ENCODE measurements at regions of chr12 and their contacts with region 1.

Region 1: DNA sequence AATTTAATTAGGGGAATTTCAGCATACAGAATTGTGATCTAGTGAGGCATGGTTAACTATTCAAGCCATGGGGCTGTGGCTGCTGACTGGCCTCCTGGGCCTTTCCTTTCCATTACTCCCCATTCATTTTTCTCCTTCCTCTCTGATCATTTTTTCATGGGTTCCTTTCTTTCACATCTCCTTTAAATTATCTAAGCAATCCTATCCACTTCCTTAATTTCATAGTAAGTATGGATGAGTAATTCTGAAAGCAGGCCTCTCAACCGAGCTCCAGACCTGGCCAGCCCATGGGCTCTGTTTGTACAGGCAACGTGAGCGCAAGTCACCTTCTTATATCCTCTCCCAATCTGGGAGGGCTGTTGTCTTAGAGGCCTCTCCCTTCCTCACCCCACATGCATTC is 13.4 kb downstream of the CKAP4 start:
- DNase-seq: no peak
- H3K4me3 ChIP-seq: no peak overlapping the region
- H3K27ac ChIP-seq: no peak overlapping the region
- H3K4me1 ChIP-seq: peaks cover 0 to 8% (median 0%) of the 10 kb centered on the region in 4 donors
- H3K27me3 ChIP-seq: no peaks in the 10 kb centered on the region
- CTCF ChIP-seq: no peak
- EP300 ChIP-seq: no peak
- POLR2A ChIP-seq: no peak

Region 2: DNA sequence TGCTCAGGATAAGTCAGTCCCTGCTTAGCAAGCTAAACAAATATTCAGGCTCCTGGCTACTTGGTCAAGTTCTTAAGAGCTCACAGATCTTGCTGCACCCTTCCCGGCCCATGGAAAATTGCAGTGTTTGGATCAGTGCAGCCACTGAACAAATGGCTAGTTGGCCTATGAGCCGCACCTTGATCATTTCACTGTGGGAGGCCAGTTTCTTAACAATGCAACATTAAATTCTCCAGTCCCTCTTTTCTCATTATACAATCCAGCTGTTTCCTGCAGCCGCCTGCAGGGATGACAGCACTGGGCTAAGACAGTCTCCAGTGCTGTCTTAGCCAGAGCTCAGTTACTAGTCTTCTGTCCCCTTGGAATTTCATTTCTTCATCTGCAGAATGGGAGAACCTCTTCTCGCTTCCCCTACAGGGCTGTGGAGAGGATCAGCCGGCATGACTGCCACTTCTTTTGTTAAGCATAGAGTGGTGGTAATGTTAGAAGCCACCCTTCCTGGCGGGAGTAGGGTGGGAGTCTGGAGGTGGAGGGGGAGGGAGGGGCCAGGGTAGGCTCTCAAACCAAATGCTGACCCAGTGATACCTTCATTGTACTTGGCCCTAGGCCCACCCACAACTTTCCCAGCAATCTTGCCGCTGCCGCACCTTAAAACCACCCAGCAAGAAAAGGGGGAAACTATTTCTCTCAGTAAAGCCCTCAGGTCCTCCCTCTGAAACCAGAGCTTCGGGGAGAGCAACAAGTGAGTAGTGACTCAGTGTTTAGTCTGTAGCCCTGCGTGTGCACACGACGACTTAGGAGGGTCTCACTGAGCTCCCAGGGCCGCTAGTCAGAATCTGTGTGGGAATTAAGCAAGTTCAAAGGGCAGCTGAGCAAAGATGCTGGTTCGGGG is 241.4 kb before region 1 on chr12:
- intact Hi-C with region 1: no loop called
- DNase-seq: peak in 1 of 2 donors; percentile 41
- H3K4me3 ChIP-seq: no peak overlapping the region
- H3K27ac ChIP-seq: peak overlapping the region in 1 of 5 donors; percentile 52
- H3K4me1 ChIP-seq: peaks cover 0 to 3% (median 0%) of the 10 kb centered on the region in 4 donors
- H3K27me3 ChIP-seq: peaks cover 0 to 18% (median 0%) of the 10 kb centered on the region in 3 donors
- CTCF ChIP-seq: no peak
- EP300 ChIP-seq: no peak
- POLR2A ChIP-seq: no peak

Region 3: DNA sequence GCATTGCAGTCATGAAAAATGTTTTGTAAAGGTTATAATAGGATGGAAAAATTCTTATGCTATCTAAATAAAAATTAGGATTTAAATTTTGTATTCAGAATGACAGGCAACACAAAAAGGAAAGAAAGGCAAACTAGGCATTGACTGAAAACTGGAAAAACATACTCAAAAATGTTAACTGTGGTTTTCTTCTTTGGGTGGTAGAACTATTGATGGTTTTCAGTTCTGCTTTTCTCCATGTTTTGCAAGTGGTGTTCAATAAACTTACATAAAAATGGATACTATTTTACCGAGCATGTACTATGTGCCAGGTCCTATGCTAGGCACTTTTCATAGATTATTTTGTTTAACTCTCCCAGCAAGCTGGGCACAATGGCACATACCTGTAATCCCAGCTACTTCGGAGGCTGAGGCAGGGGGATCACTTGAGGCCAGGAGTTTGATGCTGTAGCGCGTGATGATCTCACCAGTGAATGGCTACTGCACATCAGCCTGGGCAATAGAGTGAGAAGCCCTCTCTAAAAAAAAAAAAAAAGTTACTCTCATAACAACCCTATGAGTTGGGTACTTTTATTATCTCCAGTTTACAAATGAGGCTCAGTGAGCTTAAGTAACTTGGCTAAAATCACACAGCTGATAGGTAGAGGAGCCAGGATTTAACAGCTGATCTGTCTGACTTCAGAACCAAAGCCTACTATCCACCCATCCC is 41.7 kb after region 1 on chr12:
- intact Hi-C with region 1: loop called (anchors 5 kb)
- DNase-seq: no peak
- H3K4me3 ChIP-seq: no peak overlapping the region
- H3K27ac ChIP-seq: peak overlapping the region in 2 of 5 donors; percentile 81 to 86
- H3K4me1 ChIP-seq: peaks cover 20 to 61% (median 38%) of the 10 kb centered on the region in 4 donors
- H3K27me3 ChIP-seq: no peaks in the 10 kb centered on the region
- CTCF ChIP-seq: no peak
- EP300 ChIP-seq: no peak
- POLR2A ChIP-seq: no peak

Region 4: DNA sequence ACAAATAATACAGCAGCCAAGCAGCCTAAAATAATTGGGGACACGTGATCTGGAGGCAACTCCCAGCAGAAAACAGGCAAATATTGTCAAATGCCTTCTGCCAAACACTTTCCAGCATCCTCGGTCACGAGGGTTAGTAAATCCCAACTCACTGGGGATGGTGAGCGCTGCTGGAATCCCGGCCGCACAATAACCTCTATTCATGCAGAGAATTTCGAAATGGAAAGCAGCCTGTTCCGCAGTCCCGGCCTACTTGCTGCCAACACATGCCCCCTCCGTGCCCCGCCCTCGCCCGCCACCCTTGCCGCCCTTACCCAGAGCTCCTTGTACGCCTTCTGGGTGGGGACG is 410.6 kb after region 1 on chr12:
- intact Hi-C with region 1: no loop called
- DNase-seq: peak; percentile 71 to 81
- H3K4me3 ChIP-seq: no peak overlapping the region
- H3K27ac ChIP-seq: peak overlapping the region in 2 of 5 donors; percentile 38 to 40
- H3K4me1 ChIP-seq: peaks cover 0 to 8% (median 0%) of the 10 kb centered on the region in 4 donors
- H3K27me3 ChIP-seq: peaks cover 0 to 5% (median 0%) of the 10 kb centered on the region in 3 donors
- CTCF ChIP-seq: no peak
- EP300 ChIP-seq: no peak
- POLR2A ChIP-seq: no peak

Measured in stomach (tissue), 19 donors.